Prostate gland (tissue), 2 donors: ENCODE measurements at regions of chr14 and their contacts with region 1.

Region 1: GRCh38 chr14:54669721-54670561 is 103.0 kb downstream of the SAMD4A start:
- DNase-seq: peak; percentile 74
- H3K4me3 ChIP-seq: no peak overlapping the region
- H3K27ac ChIP-seq: peak overlapping the region; percentile 72 to 73
- H3K4me1 ChIP-seq: no peaks in the 10 kb centered on the region
- H3K27me3 ChIP-seq: no peaks in the 10 kb centered on the region
- CTCF ChIP-seq: no peak
- POLR2A ChIP-seq: no peak

Region 2: GRCh38 chr14:54652188-54652587 is 17.8 kb before region 1 on chr14:
- intact Hi-C with region 1: loop called (anchors 2 kb)
- DNase-seq: peak; percentile 76
- H3K4me3 ChIP-seq: no peak overlapping the region
- H3K27ac ChIP-seq: peak overlapping the region; percentile 52 to 73
- H3K4me1 ChIP-seq: no peaks in the 10 kb centered on the region
- H3K27me3 ChIP-seq: no peaks in the 10 kb centered on the region
- CTCF ChIP-seq: no peak
- POLR2A ChIP-seq: no peak